Left ventricle myocardium superior (tissue), 1 donor: ENCODE measurements at regions of chr15 and their contacts with region 1.

Region 1: GRCh38 chr15:48244921-48245320 is 38.8 kb downstream of the SLC12A1 start:
- DNase-seq: no peak
- ATAC-seq: no peak

Region 2: GRCh38 chr15:48185527-48185926 is 59.4 kb before region 1 on chr15:
- intact Hi-C with region 1: loop called (anchors 10 kb)
- DNase-seq: no peak
- ATAC-seq: no peak

Region 3: GRCh38 chr15:48318131-48318530 is 73.2 kb after region 1 on chr15:
- intact Hi-C with region 1: no loop called
- DNase-seq: no peak
- ATAC-seq: no peak

Region 4: GRCh38 chr15:48671103-48672022 is 426.4 kb after region 1 on chr15:
- intact Hi-C with region 1: no loop called
- DNase-seq: peak; percentile 65
- ATAC-seq: peak; percentile 92